ENCODE measurements at regions of chr1 and their contacts with region 1.

Region 1: GRCh38 chr1:26882696-26883463 is 7.2 kb downstream of the GPN2 start:
- DNase-seq: no peak
- ATAC-seq: no peak
- H3K4me3 ChIP-seq: no peak overlapping the region
- H3K4me3 Mint-ChIP-seq: no peak overlapping the region
- H3K27ac ChIP-seq: no peak overlapping the region
- H3K27ac Mint-ChIP-seq: peak overlapping the region in 4 of 9 donors; percentile 10 to 34 (median 13)
- H3K4me1 ChIP-seq: no peaks in the 10 kb centered on the region
- H3K4me1 Mint-ChIP-seq: peaks cover 6 to 17% (median 10%) of the 10 kb centered on the region in 7 donors
- H3K27me3 ChIP-seq: no peaks in the 10 kb centered on the region
- H3K27me3 Mint-ChIP-seq: no peaks in the 10 kb centered on the region

Region 2: GRCh38 chr1:26618561-26618960 is 264.3 kb before region 1 on chr1:
- CTCF ChIA-PET with region 1: no interaction called
- POLR2A ChIA-PET with region 1: no interaction called
- intact Hi-C with region 1: no loop called
- DNase-seq: no peak
- ATAC-seq: no peak
- H3K4me3 ChIP-seq: no peak overlapping the region
- H3K4me3 Mint-ChIP-seq: peak overlapping the region in 5 of 10 donors; percentile 32 to 100 (median 91)
- H3K27ac ChIP-seq: no peak overlapping the region
- H3K27ac Mint-ChIP-seq: peak overlapping the region in 7 of 9 donors; percentile 21 to 98 (median 95)
- H3K4me1 ChIP-seq: peaks cover 6 to 7% of the 10 kb centered on the region in 2 donors
- H3K4me1 Mint-ChIP-seq: peaks cover 8 to 36% (median 27%) of the 10 kb centered on the region in 7 donors
- H3K27me3 ChIP-seq: no peaks in the 10 kb centered on the region
- H3K27me3 Mint-ChIP-seq: peaks cover 0 to 4% (median 0%) of the 10 kb centered on the region in 5 donors

Region 3: GRCh38 chr1:26820784-26821269 is 62.1 kb before region 1 on chr1:
- CTCF ChIA-PET with region 1: interaction called, 6 read pairs
- POLR2A ChIA-PET with region 1: no interaction called
- intact Hi-C with region 1: loop called in 1 of 2 experiments (anchors 2 kb)
- DNase-seq: peak in 7 of 9 donors; percentile 41 to 61 (median 52)
- ATAC-seq: peak; percentile 100
- H3K4me3 ChIP-seq: peak overlapping the region; percentile 51
- H3K4me3 Mint-ChIP-seq: peak overlapping the region; percentile 55 to 86 (median 82)
- H3K27ac ChIP-seq: peak overlapping the region; percentile 54
- H3K27ac Mint-ChIP-seq: peak overlapping the region; percentile 60 to 92 (median 87)
- H3K4me1 ChIP-seq: peaks cover 12 to 22% of the 10 kb centered on the region in 2 donors
- H3K4me1 Mint-ChIP-seq: peaks cover 23 to 38% (median 29%) of the 10 kb centered on the region in 7 donors
- H3K27me3 ChIP-seq: no peaks in the 10 kb centered on the region
- H3K27me3 Mint-ChIP-seq: no peaks in the 10 kb centered on the region

Measured in naive thymus-derived CD4-positive, alpha-beta T cell (primary cell).